ENCODE measurements at regions of chr2 and their contacts with region 1.

Region 1: DNA sequence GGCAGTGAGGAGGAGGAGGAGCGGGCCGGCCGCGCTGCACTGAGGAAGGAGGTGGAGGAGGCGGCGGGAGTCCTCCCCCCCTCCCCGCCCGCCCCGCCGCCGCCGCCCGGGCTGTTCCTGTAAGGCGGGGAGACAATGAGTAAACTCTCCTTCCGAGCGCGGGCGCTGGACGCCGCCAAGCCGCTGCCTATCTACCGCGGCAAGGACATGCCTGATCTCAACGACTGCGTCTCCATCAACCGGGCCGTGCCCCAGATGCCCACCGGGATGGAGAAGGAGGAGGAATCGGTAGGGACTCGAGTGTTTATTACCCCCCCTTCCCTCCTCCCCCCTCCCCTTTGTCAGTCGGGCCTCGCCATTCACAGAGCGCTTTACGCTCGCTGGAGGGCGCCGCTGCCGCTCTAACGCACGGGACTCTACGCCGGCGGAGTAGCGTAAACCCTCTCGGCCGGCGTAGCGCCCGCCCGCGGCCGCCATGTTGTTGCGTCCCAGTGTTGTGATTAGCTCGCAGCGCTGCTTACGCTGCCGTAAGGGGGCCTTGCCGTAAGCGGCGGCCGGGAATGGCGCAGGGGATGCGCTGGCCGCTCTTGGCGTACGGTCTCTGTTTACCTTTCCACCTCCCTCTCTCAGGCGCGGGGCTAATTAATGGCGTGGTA is 460 bp downstream of the EPC2 start:
- DNase-seq: peak; percentile 93 to 98
- ATAC-seq: peak; percentile 77 to 91 (median 78)
- H3K4me3 ChIP-seq: peak overlapping the region; percentile 82
- H3K4me3 Mint-ChIP-seq: peak overlapping the region; percentile 95
- H3K27ac ChIP-seq: peak overlapping the region; percentile 97
- H3K27ac Mint-ChIP-seq: peak overlapping the region; percentile 95 to 99
- H3K4me1 ChIP-seq: peaks cover 11% of the 10 kb centered on the region
- H3K4me1 Mint-ChIP-seq: peaks cover 24 to 42% of the 10 kb centered on the region in 2 donors
- H3K27me3 ChIP-seq: peaks cover 13% of the 10 kb centered on the region
- H3K27me3 Mint-ChIP-seq: peaks cover 4 to 25% of the 10 kb centered on the region in 2 donors
- CTCF ChIP-seq: peak; percentile 20

Region 2: DNA sequence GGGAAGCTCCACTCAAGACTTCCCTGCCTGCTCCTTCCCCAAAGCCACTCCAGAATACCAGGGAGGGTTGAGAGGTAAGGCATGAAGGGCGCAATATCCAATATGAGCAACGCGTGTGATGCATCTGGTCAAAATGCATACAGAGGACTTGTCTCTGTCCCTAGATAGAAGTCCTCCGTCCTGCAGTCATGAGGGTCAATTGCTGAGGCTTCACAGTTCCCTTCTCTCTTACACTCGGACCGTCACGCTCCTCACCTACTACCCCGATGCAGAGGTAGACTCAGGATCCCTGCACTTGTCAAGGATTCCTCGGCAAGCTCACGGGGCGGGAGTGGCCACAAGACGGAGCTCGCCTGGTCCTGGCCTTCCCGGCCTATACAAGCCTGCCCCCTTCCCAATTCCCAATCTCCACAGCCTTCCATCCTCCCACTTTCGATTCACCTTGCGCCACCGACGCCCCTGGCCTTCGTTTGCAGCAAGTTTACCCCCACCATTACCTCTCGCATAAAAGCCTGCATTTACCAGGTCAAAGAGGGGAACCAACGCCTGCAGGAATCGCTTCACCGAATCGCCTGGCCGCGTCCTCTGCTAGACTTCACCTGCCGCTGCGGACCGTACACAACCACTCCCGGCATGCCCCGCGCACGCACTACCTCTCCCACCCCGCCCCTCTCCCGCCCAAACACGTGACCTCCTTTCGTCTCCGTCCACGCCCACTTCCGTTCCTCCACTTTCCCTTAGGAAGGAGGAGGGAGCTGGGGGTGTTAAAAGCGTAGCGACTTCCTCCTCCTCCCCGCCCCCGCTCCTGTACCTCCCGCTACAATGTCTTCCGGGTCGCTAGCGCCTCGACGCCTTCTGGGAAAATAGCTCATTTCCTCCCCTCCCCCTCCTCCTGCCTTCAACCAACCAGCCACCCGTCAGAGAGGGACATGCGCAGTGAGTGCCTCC is 624.6 kb before region 1 on chr2 and contains the start of gene ORC4:
- intact Hi-C with region 1: loop called (anchors 1 kb)
- DNase-seq: peak; percentile 80 to 100
- ATAC-seq: peak; percentile 78 to 93 (median 86)
- H3K4me3 ChIP-seq: peak within 1 kb of the TSS; percentile 85
- H3K4me3 Mint-ChIP-seq: peak within 1 kb of the TSS; percentile 99
- H3K27ac ChIP-seq: peak within 1 kb of the TSS; percentile 98
- H3K27ac Mint-ChIP-seq: peak within 1 kb of the TSS; percentile 92 to 93
- H3K4me1 ChIP-seq: peaks cover 13% of the 10 kb centered on the region
- H3K4me1 Mint-ChIP-seq: peaks cover 66 to 71% of the 10 kb centered on the region in 2 donors
- H3K27me3 ChIP-seq: no peaks in the 10 kb centered on the region
- H3K27me3 Mint-ChIP-seq: no peaks in the 10 kb centered on the region
- CTCF ChIP-seq: no peak
- total RNA-seq, gene ORC4: 42.4 to 48.0 (median 45.8) TPM

Region 3: GRCh38 chr2:148658807-148659722 is 14.1 kb after region 1 on chr2:
- intact Hi-C with region 1: loop called (anchors 1 kb)
- DNase-seq: peak in 1 of 2 donors; percentile 69
- ATAC-seq: peak; percentile 79 to 83 (median 80)
- H3K4me3 ChIP-seq: no peak overlapping the region
- H3K4me3 Mint-ChIP-seq: peak overlapping the region; percentile 81
- H3K27ac ChIP-seq: peak overlapping the region; percentile 50
- H3K27ac Mint-ChIP-seq: peak overlapping the region; percentile 84 to 88
- H3K4me1 ChIP-seq: peaks cover 8% of the 10 kb centered on the region
- H3K4me1 Mint-ChIP-seq: peaks cover 65 to 70% of the 10 kb centered on the region in 2 donors
- H3K27me3 ChIP-seq: no peaks in the 10 kb centered on the region
- H3K27me3 Mint-ChIP-seq: no peaks in the 10 kb centered on the region
- CTCF ChIP-seq: no peak

Region 4: DNA sequence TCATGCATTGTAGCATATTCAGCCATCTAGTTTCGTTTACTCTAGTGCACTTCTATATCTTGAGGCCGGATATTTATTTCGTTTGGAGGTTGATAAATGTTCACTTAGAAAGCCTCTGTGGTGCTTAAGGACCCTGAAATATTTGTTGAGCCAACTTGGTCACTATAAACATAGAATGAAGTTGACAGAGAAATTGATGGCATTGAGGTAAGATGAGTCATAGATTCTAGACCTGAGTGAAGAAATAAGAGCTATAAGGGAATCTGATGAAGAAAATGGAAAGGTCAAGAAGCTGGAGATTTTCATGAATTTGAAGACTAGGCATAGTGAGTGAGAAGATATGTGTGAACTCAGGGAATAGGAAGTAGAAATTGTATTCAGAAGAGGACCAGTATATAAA is 35.5 kb after region 1 on chr2:
- intact Hi-C with region 1: loop called (anchors 5 kb)
- DNase-seq: no peak
- ATAC-seq: no peak
- H3K4me3 ChIP-seq: no peak overlapping the region
- H3K4me3 Mint-ChIP-seq: no peak overlapping the region
- H3K27ac ChIP-seq: no peak overlapping the region
- H3K27ac Mint-ChIP-seq: peak overlapping the region; percentile 1 to 7
- H3K4me1 ChIP-seq: no peaks in the 10 kb centered on the region
- H3K4me1 Mint-ChIP-seq: peaks cover 57 to 62% of the 10 kb centered on the region in 2 donors
- H3K27me3 ChIP-seq: no peaks in the 10 kb centered on the region
- H3K27me3 Mint-ChIP-seq: no peaks in the 10 kb centered on the region
- CTCF ChIP-seq: no peak

Region 5: DNA sequence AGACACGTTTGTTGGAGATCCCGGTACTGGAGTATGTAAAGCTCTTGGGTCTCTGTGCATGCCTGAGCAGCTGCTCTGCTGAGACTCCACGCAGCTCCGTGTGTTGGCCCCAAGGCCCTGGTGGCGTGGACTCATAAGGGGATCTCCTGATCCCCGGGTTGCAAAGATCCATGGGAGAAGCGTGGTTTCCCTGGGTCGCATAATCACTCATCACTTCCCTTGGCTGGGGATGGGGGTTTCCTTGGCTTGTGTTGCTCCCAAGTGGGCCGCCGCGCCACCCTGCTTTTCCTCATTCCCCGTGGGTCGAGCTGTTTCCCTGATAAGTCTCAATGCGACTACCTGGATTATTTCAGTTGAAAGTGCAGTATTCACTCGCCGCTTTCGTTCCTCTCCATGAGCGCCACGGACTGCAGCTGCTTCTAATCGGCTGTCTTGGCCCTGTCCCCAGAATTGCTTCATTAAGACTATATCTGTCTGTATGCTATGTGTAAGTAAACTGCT is 75.5 kb after region 1 on chr2:
- intact Hi-C with region 1: no loop called
- DNase-seq: peak in 1 of 2 donors; percentile 15
- ATAC-seq: no peak
- H3K4me3 ChIP-seq: no peak overlapping the region
- H3K4me3 Mint-ChIP-seq: no peak overlapping the region
- H3K27ac ChIP-seq: no peak overlapping the region
- H3K27ac Mint-ChIP-seq: peak overlapping the region; percentile 27 to 71
- H3K4me1 ChIP-seq: peaks cover 14% of the 10 kb centered on the region
- H3K4me1 Mint-ChIP-seq: peaks cover 85 to 91% of the 10 kb centered on the region in 2 donors
- H3K27me3 ChIP-seq: no peaks in the 10 kb centered on the region
- H3K27me3 Mint-ChIP-seq: no peaks in the 10 kb centered on the region
- CTCF ChIP-seq: no peak

Region 6: GRCh38 chr2:149463328-149464002 is 818.5 kb after region 1 on chr2:
- intact Hi-C with region 1: no loop called
- DNase-seq: no peak
- ATAC-seq: no peak
- H3K4me3 ChIP-seq: no peak overlapping the region
- H3K4me3 Mint-ChIP-seq: no peak overlapping the region
- H3K27ac ChIP-seq: no peak overlapping the region
- H3K27ac Mint-ChIP-seq: no peak overlapping the region
- H3K4me1 ChIP-seq: no peaks in the 10 kb centered on the region
- H3K4me1 Mint-ChIP-seq: no peaks in the 10 kb centered on the region
- H3K27me3 ChIP-seq: no peaks in the 10 kb centered on the region
- H3K27me3 Mint-ChIP-seq: no peaks in the 10 kb centered on the region
- CTCF ChIP-seq: no peak

Measured in natural killer cell (primary cell).